Activated T-helper 2 cell treated with anti-CD3 and anti-CD28 coated beads, Interferon-gamma antibody, Interleukin-2, Interleukin-4, amounts not matched to agents 10 μg/mL and 5 μg/mL and 100 μg/mL, durations not matched to agents 14 hours and 24 hours and 36 hours (primary cell): ENCODE measurements at regions of chr16 and their contacts with region 1.

Region 1: DNA sequence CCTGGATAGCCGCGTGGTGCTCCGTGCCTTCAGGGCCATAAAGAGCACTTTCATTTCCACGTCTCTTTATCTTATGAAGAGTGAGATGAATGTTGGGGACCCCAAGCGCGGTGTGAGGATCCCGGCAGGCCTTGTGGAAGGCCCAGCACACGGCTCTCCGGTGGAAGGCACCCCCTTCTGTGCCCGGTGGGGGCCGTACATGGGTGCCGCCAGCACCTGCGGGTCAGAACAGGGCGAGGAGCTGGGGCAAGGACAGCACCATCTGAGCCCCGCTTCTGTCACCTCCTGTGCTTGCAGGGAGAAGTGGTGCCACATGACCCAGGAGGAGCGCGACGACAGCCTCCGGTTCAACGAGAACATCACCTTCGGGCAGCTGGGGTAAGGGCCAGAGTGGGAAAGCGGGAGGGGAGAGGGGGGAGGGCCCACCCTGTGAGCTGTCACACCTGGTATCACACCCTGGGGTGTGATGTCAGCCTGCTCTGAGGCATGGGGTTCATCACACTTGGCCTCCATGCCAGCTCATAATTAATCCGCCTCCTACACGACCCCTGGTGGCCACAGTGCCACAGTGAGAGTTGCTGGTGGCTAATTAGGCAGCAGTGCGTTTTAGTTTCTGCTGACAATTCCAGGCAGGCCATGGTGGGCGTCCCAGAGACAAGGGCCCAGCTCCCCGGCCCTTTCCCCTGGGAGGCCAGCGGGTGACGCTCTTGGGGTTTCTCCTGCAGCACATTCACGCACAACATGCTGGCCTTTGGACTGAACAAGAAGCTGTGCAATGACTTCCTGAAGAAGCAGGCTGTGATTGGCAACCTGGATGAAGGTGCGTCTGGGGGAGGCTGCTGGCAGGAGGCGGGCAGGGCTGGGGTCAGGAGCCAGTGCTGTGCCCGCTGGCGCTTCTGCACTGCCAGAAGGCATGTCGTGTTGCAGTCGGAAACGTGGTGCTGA is 25.7 kb downstream of the CIBAR2 start:
- DNase-seq: peak; percentile 69
- H3K4me3 Mint-ChIP-seq: no peak overlapping the region
- H3K27ac Mint-ChIP-seq: no peak overlapping the region
- H3K4me1 Mint-ChIP-seq: peaks cover 4% of the 10 kb centered on the region
- H3K27me3 Mint-ChIP-seq: peaks cover 3% of the 10 kb centered on the region

Region 2: GRCh38 chr16:85010931-85011845 is 75.4 kb before region 1 on chr16 and contains the start of gene ZDHHC7:
- intact Hi-C with region 1: loop called (anchors 5 kb)
- DNase-seq: peak; percentile 78
- H3K4me3 Mint-ChIP-seq: peak within 1 kb of the TSS; percentile 97
- H3K27ac Mint-ChIP-seq: peak within 1 kb of the TSS; percentile 98
- H3K4me1 Mint-ChIP-seq: peaks cover 17% of the 10 kb centered on the region
- H3K27me3 Mint-ChIP-seq: no peaks in the 10 kb centered on the region
- total RNA-seq, gene ZDHHC7: 29.1 and 30.0 TPM in 2 replicates

Region 3: GRCh38 chr16:85027349-85027957 is 59.2 kb before region 1 on chr16 and contains the start of gene KIAA0513:
- intact Hi-C with region 1: loop called (anchors 1 kb)
- DNase-seq: peak; percentile 94
- H3K4me3 Mint-ChIP-seq: peak within 1 kb of the TSS; percentile 88
- H3K27ac Mint-ChIP-seq: peak within 1 kb of the TSS; percentile 96
- H3K4me1 Mint-ChIP-seq: peaks cover 33% of the 10 kb centered on the region
- H3K27me3 Mint-ChIP-seq: no peaks in the 10 kb centered on the region
- total RNA-seq, gene KIAA0513: 12.8 and 13.6 TPM in 2 replicates

Region 4: GRCh38 chr16:85055503-85056210 is 31.0 kb before region 1 on chr16:
- intact Hi-C with region 1: loop called (anchors 1 kb)
- DNase-seq: peak; percentile 85
- H3K4me3 Mint-ChIP-seq: peak overlapping the region; percentile 37
- H3K27ac Mint-ChIP-seq: peak overlapping the region; percentile 80
- H3K4me1 Mint-ChIP-seq: peaks cover 35% of the 10 kb centered on the region
- H3K27me3 Mint-ChIP-seq: peaks cover 12% of the 10 kb centered on the region